Naive thymus-derived CD4-positive, alpha-beta T cell (primary cell): ENCODE measurements at regions of chr6 and their contacts with region 1.

Region 1: DNA sequence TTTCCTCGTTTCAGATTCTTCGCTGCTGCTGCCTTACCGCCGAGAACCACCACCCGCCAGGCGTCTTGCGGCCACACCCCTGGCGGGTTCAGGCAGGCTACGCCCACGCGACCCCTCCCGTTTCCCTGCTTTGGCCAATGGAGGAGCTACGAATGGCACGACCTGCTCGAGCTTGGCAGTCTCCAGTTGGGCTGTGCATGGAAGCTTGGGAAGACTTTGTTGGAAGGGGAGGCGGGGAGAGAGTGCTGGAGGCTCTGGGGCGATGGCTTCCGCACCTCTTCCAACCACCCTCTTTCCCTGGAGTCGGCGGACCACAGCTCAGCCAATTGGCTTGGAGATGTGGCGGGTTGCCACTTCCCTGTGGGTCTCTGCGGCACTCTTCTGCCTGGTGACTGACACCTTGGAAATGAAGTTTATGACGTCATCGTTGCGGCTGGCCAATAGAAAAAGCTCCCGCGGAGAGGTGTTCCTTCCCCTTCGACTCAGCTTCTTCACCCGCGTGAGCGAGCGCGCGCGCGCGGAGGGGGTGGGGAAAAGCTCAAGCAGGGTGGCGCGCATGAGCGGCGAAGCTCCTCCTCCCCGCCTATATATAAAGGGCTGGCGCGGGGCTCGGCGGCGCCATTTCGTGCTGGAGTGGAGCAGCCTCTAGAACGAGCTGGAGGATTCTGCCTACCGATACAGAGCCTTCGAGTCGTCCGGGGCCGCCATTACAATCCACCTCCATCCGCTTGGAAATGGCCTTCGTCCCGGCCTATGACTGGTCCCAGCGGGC is 3.4 kb downstream of the BRD2 start:
- DNase-seq: peak; percentile 99 to 100 (median 100)
- ATAC-seq: peak; percentile 73
- H3K4me3 ChIP-seq: peak overlapping the region; percentile 98
- H3K4me3 Mint-ChIP-seq: peak overlapping the region; percentile 89 to 100 (median 98)
- H3K27ac ChIP-seq: peak overlapping the region; percentile 94
- H3K27ac Mint-ChIP-seq: peak overlapping the region; percentile 78 to 100 (median 99)
- H3K4me1 ChIP-seq: peaks cover 26 to 32% of the 10 kb centered on the region in 2 donors
- H3K4me1 Mint-ChIP-seq: peaks cover 31 to 47% (median 40%) of the 10 kb centered on the region in 7 donors
- H3K27me3 ChIP-seq: no peaks in the 10 kb centered on the region
- H3K27me3 Mint-ChIP-seq: peaks cover 0 to 5% (median 0%) of the 10 kb centered on the region in 5 donors

Region 2: DNA sequence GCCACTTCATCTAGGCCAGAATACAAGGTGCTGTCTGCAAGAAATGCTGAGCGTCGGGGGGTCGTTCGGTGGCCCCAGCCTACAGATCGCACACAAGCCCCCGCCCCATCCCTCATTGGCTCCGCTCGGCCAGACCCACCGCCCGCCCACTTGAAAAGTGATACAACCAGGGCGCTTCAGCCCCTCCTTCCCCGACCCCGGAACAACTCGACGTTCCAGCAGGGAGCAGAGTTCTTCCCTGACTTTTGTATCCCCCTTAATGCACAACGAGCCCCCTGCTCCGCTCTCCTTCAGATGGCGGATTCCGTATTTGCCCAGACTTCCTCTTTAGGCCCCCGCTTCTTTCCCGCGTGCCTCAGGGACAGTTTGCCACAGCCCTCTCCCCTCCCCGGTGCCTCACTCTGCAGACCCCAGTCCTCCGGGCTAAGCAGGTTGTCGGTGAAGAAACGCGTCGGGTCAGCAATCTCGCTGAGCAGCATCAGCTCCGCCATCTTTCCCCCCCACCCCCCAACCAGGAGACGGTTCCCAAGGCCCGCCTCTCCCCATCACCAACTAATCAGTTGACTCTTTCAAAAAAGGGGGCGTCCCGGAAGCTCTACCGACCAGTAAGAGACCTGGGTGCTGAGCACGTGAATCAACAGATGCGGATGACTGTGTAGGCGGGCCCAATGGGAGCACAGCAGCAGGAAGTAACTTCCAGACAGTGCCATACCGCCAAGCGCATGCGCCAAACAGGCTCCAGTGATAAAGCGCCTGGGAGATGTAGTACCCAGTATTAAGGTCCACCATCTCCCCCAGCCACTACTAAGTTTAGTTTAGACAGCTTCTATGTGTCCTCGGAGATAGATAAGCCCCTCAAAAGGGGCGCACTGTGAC is 843.8 kb before region 1 on chr6 and contains the start of gene ATF6B:
- CTCF ChIA-PET with region 1: no interaction called
- POLR2A ChIA-PET with region 1: interaction called, 21 read pairs
- intact Hi-C with region 1: loop called in 1 of 2 experiments (anchors 5 kb)
- DNase-seq: peak; percentile 80 to 100 (median 96)
- ATAC-seq: peak; percentile 97
- H3K4me3 ChIP-seq: peak within 1 kb of the TSS; percentile 96
- H3K4me3 Mint-ChIP-seq: peak within 1 kb of the TSS; percentile 96 to 100 (median 98)
- H3K27ac ChIP-seq: peak within 1 kb of the TSS; percentile 92
- H3K27ac Mint-ChIP-seq: peak within 1 kb of the TSS; percentile 83 to 98 (median 97)
- H3K4me1 ChIP-seq: peaks cover 33% of the 10 kb centered on the region in 2 donors
- H3K4me1 Mint-ChIP-seq: peaks cover 38 to 66% (median 53%) of the 10 kb centered on the region in 7 donors
- H3K27me3 ChIP-seq: no peaks in the 10 kb centered on the region
- H3K27me3 Mint-ChIP-seq: peaks cover 0 to 4% (median 0%) of the 10 kb centered on the region in 5 donors
- total RNA-seq, gene ATF6B: 115 to 168 (median 142) TPM

Region 3: DNA sequence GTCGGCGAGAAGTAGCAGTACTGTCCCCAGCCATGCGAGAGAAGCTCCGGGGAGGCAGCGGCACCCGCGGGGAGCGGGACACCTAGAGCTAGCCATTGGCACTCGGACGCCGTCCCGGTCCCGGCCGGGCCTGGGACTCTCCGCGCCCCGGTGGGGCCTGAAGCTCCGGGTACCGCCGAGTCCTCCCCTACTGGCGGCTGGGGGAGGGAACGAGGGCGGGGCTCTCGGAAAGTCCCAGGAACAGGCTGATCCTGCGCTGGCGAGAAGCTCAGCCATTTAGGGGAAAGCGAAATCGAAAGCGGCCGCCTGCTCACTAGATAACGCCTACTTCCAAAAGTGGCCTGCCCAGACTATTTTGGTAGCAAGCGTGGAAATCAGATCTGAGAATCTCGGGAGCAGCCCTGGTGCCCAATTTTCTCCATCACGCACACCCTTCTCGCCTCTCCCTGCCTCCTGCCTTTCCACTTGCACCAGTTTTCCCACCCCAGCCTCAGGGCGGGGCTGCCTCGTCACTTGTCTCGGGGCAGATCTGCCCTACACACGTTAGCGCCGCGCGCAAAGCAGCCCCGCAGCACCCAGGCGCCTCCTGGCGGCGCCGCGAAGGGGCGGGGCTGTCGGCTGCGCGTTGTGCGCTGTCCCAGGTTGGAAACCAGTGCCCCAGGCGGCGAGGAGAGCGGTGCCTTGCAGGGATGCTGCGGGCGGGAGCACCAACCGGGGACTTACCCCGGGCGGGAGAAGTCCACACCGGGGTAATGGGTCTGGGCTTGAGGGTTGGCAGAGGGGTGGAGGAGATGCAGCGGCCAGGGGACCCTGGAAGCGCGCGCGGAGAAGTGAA is 118.0 kb before region 1 on chr6 and contains the starts of genes PSMB9 and TAP1:
- CTCF ChIA-PET with region 1: interaction called, 13 read pairs
- POLR2A ChIA-PET with region 1: interaction called, 97 read pairs
- intact Hi-C with region 1: loop called (anchors 1 kb)
- DNase-seq: peak; percentile 92 to 97 (median 94)
- ATAC-seq: peak; percentile 92
- H3K4me3 ChIP-seq: peak within 1 kb of the TSS; percentile 91
- H3K4me3 Mint-ChIP-seq: peak within 1 kb of the TSS; percentile 96 to 100 (median 100)
- H3K27ac ChIP-seq: peak within 1 kb of the TSS; percentile 100
- H3K27ac Mint-ChIP-seq: peak within 1 kb of the TSS; percentile 97 to 100 (median 100)
- H3K4me1 ChIP-seq: peaks cover 45 to 57% of the 10 kb centered on the region in 2 donors
- H3K4me1 Mint-ChIP-seq: peaks cover 61 to 80% (median 72%) of the 10 kb centered on the region in 7 donors
- H3K27me3 ChIP-seq: no peaks in the 10 kb centered on the region
- H3K27me3 Mint-ChIP-seq: no peaks in the 10 kb centered on the region
- total RNA-seq, gene PSMB9: 70.3 to 452 (median 90.5) TPM
- total RNA-seq, gene TAP1: 92.1 to 500 (median 103) TPM

Region 4: GRCh38 chr6:32940656-32941213 is 31.0 kb before region 1 on chr6 and contains the start of gene HLA-DMB:
- CTCF ChIA-PET with region 1: interaction called, 29 read pairs
- POLR2A ChIA-PET with region 1: interaction called, 614 read pairs
- intact Hi-C with region 1: loop called (anchors 1 kb)
- DNase-seq: peak in 7 of 9 donors; percentile 64 to 80 (median 74)
- ATAC-seq: peak; percentile 86
- H3K4me3 ChIP-seq: peak within 1 kb of the TSS; percentile 66
- H3K4me3 Mint-ChIP-seq: peak within 1 kb of the TSS; percentile 85 to 97 (median 94)
- H3K27ac ChIP-seq: peak within 1 kb of the TSS; percentile 75
- H3K27ac Mint-ChIP-seq: peak within 1 kb of the TSS; percentile 95 to 98 (median 96)
- H3K4me1 ChIP-seq: peaks cover 50 to 55% of the 10 kb centered on the region in 2 donors
- H3K4me1 Mint-ChIP-seq: peaks cover 55 to 67% (median 62%) of the 10 kb centered on the region in 7 donors
- H3K27me3 ChIP-seq: no peaks in the 10 kb centered on the region
- H3K27me3 Mint-ChIP-seq: peaks cover 0 to 7% (median 0%) of the 10 kb centered on the region in 5 donors
- total RNA-seq, gene HLA-DMB: 7.8 to 82.5 (median 9.1) TPM

Region 5: DNA sequence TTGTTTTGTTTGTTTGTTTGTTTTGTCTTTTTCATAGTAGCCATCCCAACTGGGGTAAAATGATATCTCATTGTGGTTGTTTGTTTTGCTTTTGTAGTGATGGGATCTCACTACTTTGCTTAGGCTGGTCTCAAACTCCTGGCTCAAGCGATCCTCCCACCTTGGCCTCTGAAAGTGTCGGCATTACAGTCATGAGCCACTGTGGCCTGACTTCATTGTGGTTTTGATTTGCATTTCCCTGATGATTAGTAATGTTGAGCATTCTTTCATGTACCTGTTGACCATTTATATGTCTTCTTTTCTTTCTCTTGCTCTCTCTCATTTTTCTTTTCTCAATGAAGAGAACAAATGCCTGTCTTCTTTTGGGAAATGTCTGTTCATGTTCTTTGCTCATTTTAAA is 68.4 kb after region 1 on chr6:
- CTCF ChIA-PET with region 1: no interaction called
- POLR2A ChIA-PET with region 1: no interaction called
- intact Hi-C with region 1: no loop called
- DNase-seq: no peak
- ATAC-seq: no peak
- H3K4me3 ChIP-seq: no peak overlapping the region
- H3K4me3 Mint-ChIP-seq: no peak overlapping the region
- H3K27ac ChIP-seq: no peak overlapping the region
- H3K27ac Mint-ChIP-seq: no peak overlapping the region
- H3K4me1 ChIP-seq: no peaks in the 10 kb centered on the region
- H3K4me1 Mint-ChIP-seq: no peaks in the 10 kb centered on the region
- H3K27me3 ChIP-seq: no peaks in the 10 kb centered on the region
- H3K27me3 Mint-ChIP-seq: peaks cover 5 to 74% (median 15%) of the 10 kb centered on the region in 5 donors

Region 6: DNA sequence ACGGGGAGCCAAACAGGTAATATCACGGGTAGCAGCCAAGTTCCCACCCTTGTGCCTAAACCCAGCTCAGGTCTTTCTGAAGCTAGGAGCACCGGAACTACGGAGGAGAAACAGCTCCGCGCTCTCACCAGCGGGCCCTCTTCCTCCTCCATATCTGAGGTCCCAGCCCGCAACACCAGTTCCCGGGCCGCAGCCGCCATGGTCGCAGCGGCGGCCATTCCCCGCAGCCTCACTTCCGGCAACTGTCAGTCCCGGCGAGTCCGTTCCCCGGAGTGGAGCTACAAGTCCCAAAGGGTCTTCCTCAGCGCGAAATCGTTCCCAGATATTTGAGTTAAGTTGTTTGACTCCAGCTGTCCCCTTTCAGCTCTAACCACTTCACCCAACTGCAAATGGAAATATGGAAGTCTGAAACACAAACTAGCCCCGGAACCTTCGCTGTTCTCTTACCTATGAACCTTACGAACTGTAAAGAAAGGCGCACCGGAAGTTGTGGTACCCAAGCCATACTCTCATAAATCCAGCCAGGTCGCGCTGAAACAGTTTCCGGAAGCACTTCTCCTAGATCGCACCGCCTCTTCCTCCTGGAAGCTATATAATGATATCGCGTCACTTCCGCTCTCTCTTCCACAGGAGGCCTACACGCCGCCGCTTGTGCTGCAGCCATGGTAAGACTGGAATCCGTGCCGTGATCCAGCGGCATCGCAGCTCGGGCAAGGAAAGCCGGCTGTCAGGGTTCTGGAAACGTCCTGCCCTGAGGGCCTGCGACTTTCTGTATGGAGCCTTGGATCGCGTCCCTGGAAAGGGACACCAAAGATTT is 299.9 kb after region 1 on chr6 and contains the starts of genes RPS18 and VPS52:
- CTCF ChIA-PET with region 1: no interaction called
- POLR2A ChIA-PET with region 1: interaction called, 24 read pairs
- intact Hi-C with region 1: loop called in 1 of 2 experiments (anchors 5 kb)
- DNase-seq: peak; percentile 84 to 97 (median 93)
- ATAC-seq: peak; percentile 91
- H3K4me3 ChIP-seq: peak within 1 kb of the TSS; percentile 93
- H3K4me3 Mint-ChIP-seq: peak within 1 kb of the TSS; percentile 87 to 100 (median 98)
- H3K27ac ChIP-seq: peak within 1 kb of the TSS; percentile 91
- H3K27ac Mint-ChIP-seq: peak within 1 kb of the TSS; percentile 95 to 100 (median 99)
- H3K4me1 ChIP-seq: peaks cover 41 to 44% of the 10 kb centered on the region in 2 donors
- H3K4me1 Mint-ChIP-seq: peaks cover 34 to 81% (median 66%) of the 10 kb centered on the region in 7 donors
- H3K27me3 ChIP-seq: no peaks in the 10 kb centered on the region
- H3K27me3 Mint-ChIP-seq: peaks cover 0 to 3% (median 0%) of the 10 kb centered on the region in 5 donors
- total RNA-seq, gene RPS18: 2,454 to 4,896 (median 3,431) TPM
- total RNA-seq, gene VPS52: 74.3 to 110 (median 90.5) TPM

Region 7: GRCh38 chr6:33410050-33410710 is 438.4 kb after region 1 on chr6:
- CTCF ChIA-PET with region 1: no interaction called
- POLR2A ChIA-PET with region 1: interaction called, 3 read pairs
- intact Hi-C with region 1: loop called (anchors 2 to 5 kb)
- DNase-seq: peak; percentile 94 to 98 (median 95)
- ATAC-seq: peak; percentile 82
- H3K4me3 ChIP-seq: peak overlapping the region; percentile 78
- H3K4me3 Mint-ChIP-seq: peak overlapping the region; percentile 85 to 95 (median 90)
- H3K27ac ChIP-seq: peak overlapping the region; percentile 100
- H3K27ac Mint-ChIP-seq: peak overlapping the region; percentile 65 to 99 (median 97)
- H3K4me1 ChIP-seq: peaks cover 35 to 36% of the 10 kb centered on the region in 2 donors
- H3K4me1 Mint-ChIP-seq: peaks cover 25 to 60% (median 46%) of the 10 kb centered on the region in 7 donors
- H3K27me3 ChIP-seq: no peaks in the 10 kb centered on the region
- H3K27me3 Mint-ChIP-seq: no peaks in the 10 kb centered on the region